Caco-2 (cell line): ENCODE measurements at regions of chr5 and their contacts with region 1.

Region 1: DNA sequence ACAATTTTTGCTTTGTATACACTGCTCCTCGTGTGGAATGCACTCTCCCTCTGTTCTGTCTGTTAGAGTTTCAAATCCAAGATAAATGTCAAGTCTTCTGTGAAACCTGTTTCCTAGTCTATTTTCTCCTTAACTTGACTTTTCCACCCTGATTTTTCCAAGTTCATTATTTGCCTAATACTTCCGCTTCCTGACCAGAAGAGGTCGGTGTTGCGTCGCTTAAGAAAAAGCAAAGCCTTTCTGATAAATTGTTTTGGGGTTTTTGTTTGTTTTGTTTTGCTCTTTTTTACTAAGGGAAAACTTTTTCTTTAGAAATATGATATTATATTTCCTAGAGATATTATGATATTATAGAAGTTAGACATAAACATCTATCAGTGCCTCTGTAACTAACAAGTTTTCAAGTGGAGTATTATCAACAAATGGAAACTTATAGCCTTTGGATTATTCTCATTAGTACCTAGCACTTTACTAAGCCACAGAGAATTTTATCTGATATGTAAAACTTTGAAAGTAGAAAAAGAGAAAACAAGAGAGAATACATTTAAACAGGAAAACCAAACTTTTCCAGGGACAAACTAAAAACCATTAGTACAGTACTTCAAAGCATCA is 55.8 kb downstream of the PHAX start:
- DNase-seq: peak in 1 of 2 experiments; percentile 18
- H3K4me3 ChIP-seq: no peak overlapping the region
- H3K4me3 Mint-ChIP-seq: no peak overlapping the region
- H3K27ac Mint-ChIP-seq: no peak overlapping the region
- H3K4me1 ChIP-seq: no peaks in the 10 kb centered on the region
- H3K4me1 Mint-ChIP-seq: no peaks in the 10 kb centered on the region
- H3K27me3 ChIP-seq: no peaks in the 10 kb centered on the region
- H3K27me3 Mint-ChIP-seq: no peaks in the 10 kb centered on the region
- CTCF ChIP-seq: peak; percentile 85 to 93

Region 2: GRCh38 chr5:126693806-126694802 is 37.6 kb after region 1 on chr5:
- CTCF ChIA-PET with region 1: no interaction called
- POLR2A ChIA-PET with region 1: no interaction called
- intact Hi-C with region 1: no loop called
- DNase-seq: no peak
- H3K4me3 ChIP-seq: no peak overlapping the region
- H3K4me3 Mint-ChIP-seq: no peak overlapping the region
- H3K27ac Mint-ChIP-seq: no peak overlapping the region
- H3K4me1 ChIP-seq: no peaks in the 10 kb centered on the region
- H3K4me1 Mint-ChIP-seq: no peaks in the 10 kb centered on the region
- H3K27me3 ChIP-seq: no peaks in the 10 kb centered on the region
- H3K27me3 Mint-ChIP-seq: no peaks in the 10 kb centered on the region
- CTCF ChIP-seq: no peak

Region 3: GRCh38 chr5:126707080-126707479 is 50.6 kb after region 1 on chr5:
- CTCF ChIA-PET with region 1: no interaction called
- POLR2A ChIA-PET with region 1: no interaction called
- intact Hi-C with region 1: no loop called
- DNase-seq: no peak
- H3K4me3 ChIP-seq: no peak overlapping the region
- H3K4me3 Mint-ChIP-seq: no peak overlapping the region
- H3K27ac Mint-ChIP-seq: no peak overlapping the region
- H3K4me1 ChIP-seq: no peaks in the 10 kb centered on the region
- H3K4me1 Mint-ChIP-seq: no peaks in the 10 kb centered on the region
- H3K27me3 ChIP-seq: no peaks in the 10 kb centered on the region
- H3K27me3 Mint-ChIP-seq: no peaks in the 10 kb centered on the region
- CTCF ChIP-seq: no peak

Region 4: GRCh38 chr5:126723643-126724042 is 67.1 kb after region 1 on chr5:
- CTCF ChIA-PET with region 1: no interaction called
- POLR2A ChIA-PET with region 1: no interaction called
- intact Hi-C with region 1: no loop called
- DNase-seq: no peak
- H3K4me3 ChIP-seq: no peak overlapping the region
- H3K4me3 Mint-ChIP-seq: no peak overlapping the region
- H3K27ac Mint-ChIP-seq: no peak overlapping the region
- H3K4me1 ChIP-seq: no peaks in the 10 kb centered on the region
- H3K4me1 Mint-ChIP-seq: no peaks in the 10 kb centered on the region
- H3K27me3 ChIP-seq: no peaks in the 10 kb centered on the region
- H3K27me3 Mint-ChIP-seq: no peaks in the 10 kb centered on the region
- CTCF ChIP-seq: no peak

Region 5: GRCh38 chr5:126776497-126777256 is 120.2 kb after region 1 on chr5 and contains the start of gene LMNB1:
- CTCF ChIA-PET with region 1: interaction called, 8 read pairs
- POLR2A ChIA-PET with region 1: no interaction called
- intact Hi-C with region 1: loop called (anchors 1 kb)
- DNase-seq: peak; percentile 98 to 99
- H3K4me3 ChIP-seq: peak within 1 kb of the TSS; percentile 92
- H3K4me3 Mint-ChIP-seq: peak within 1 kb of the TSS; percentile 99
- H3K27ac Mint-ChIP-seq: peak within 1 kb of the TSS; percentile 96
- H3K4me1 ChIP-seq: peaks cover 15% of the 10 kb centered on the region
- H3K4me1 Mint-ChIP-seq: peaks cover 6% of the 10 kb centered on the region
- H3K27me3 ChIP-seq: no peaks in the 10 kb centered on the region
- H3K27me3 Mint-ChIP-seq: no peaks in the 10 kb centered on the region
- CTCF ChIP-seq: no peak
- total RNA-seq, gene LMNB1: 143 and 152 TPM in 2 replicates

Region 6: DNA sequence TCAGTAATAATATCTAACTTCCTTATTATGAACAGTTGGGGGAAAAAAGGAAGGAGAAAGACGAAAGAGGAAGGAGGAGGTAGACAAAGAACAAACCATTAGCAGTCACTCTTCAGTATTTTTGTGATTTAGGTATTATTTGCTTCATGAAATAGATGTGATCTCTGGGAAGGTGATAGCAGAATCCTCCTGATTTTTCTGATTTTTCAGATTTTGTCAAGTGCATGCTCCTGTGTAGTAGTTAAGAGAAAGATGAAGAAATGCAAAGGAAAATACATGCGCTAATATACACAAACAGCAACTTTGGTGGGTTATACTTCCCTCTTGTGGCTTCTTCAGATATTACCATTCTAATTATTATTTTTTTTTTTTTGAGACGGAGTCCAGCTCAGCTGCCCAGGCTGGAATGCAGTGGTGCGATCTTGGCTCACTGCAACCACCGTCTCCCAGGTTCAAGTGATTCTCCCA is 152.1 kb after region 1 on chr5:
- CTCF ChIA-PET with region 1: no interaction called
- POLR2A ChIA-PET with region 1: interaction called, 4 read pairs
- intact Hi-C with region 1: loop called (anchors 1 kb)
- DNase-seq: peak in 1 of 2 experiments; percentile 35
- H3K4me3 ChIP-seq: no peak overlapping the region
- H3K4me3 Mint-ChIP-seq: no peak overlapping the region
- H3K27ac Mint-ChIP-seq: no peak overlapping the region
- H3K4me1 ChIP-seq: no peaks in the 10 kb centered on the region
- H3K4me1 Mint-ChIP-seq: no peaks in the 10 kb centered on the region
- H3K27me3 ChIP-seq: no peaks in the 10 kb centered on the region
- H3K27me3 Mint-ChIP-seq: no peaks in the 10 kb centered on the region
- CTCF ChIP-seq: peak; percentile 43 to 49

Region 7: DNA sequence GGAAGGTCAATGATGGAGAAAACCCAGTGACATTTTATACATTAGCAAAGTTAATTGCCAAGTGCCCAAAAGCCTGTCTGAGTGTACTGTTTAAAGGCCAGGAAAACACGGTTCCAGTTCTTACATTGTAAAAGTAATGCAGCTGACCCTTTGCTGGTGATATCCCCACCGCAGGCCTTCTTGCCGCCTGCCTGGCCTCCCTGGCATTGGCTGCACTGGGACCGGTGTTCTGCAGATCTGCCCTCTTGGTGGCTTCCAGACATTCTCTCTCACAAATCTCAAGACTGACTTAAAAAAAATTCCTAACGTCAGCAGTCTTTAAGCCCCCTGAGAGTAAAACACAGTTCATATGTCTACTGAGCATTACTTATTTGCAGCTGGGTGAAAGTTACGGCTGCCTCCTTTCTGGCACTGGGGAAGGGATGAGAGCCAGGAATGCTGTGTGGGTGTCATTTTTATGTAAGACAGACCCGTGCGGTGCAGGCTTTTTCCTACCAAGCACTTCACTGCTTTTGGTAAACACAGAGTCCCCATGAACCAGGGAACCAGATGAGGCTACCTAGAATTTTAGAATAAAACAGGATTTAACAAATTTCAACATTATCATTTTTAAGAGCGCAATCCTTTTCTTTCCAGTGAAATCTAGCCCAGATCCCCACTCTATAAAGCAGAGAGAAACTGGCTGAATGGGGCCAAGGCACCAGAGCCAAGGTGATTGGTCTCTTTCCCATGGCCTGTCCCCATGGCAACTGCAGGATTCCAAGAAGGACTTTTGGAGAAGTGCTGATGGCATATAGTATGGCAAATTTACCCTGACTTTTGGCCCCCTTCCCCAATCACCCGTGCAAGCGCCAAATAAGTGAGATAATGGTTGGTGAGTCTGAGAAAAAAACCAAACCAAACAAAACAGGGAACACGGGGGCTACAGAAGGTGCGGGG is 201.2 kb after region 1 on chr5:
- CTCF ChIA-PET with region 1: no interaction called
- POLR2A ChIA-PET with region 1: no interaction called
- intact Hi-C with region 1: loop called (anchors 5 kb)
- DNase-seq: no peak
- H3K4me3 ChIP-seq: no peak overlapping the region
- H3K4me3 Mint-ChIP-seq: no peak overlapping the region
- H3K27ac Mint-ChIP-seq: no peak overlapping the region
- H3K4me1 ChIP-seq: no peaks in the 10 kb centered on the region
- H3K4me1 Mint-ChIP-seq: no peaks in the 10 kb centered on the region
- H3K27me3 ChIP-seq: no peaks in the 10 kb centered on the region
- H3K27me3 Mint-ChIP-seq: no peaks in the 10 kb centered on the region
- CTCF ChIP-seq: no peak

Region 8: GRCh38 chr5:127229185-127229889 is 572.8 kb after region 1 on chr5:
- CTCF ChIA-PET with region 1: no interaction called
- POLR2A ChIA-PET with region 1: no interaction called
- intact Hi-C with region 1: loop called (anchors 5 kb)
- DNase-seq: peak; percentile 60 to 64
- H3K4me3 ChIP-seq: peak overlapping the region; percentile 60
- H3K4me3 Mint-ChIP-seq: peak overlapping the region; percentile 70
- H3K27ac Mint-ChIP-seq: no peak overlapping the region
- H3K4me1 ChIP-seq: no peaks in the 10 kb centered on the region
- H3K4me1 Mint-ChIP-seq: no peaks in the 10 kb centered on the region
- H3K27me3 ChIP-seq: no peaks in the 10 kb centered on the region
- H3K27me3 Mint-ChIP-seq: peaks cover 10% of the 10 kb centered on the region
- CTCF ChIP-seq: peak in 1 of 2 experiments; percentile 56

Region 9: DNA sequence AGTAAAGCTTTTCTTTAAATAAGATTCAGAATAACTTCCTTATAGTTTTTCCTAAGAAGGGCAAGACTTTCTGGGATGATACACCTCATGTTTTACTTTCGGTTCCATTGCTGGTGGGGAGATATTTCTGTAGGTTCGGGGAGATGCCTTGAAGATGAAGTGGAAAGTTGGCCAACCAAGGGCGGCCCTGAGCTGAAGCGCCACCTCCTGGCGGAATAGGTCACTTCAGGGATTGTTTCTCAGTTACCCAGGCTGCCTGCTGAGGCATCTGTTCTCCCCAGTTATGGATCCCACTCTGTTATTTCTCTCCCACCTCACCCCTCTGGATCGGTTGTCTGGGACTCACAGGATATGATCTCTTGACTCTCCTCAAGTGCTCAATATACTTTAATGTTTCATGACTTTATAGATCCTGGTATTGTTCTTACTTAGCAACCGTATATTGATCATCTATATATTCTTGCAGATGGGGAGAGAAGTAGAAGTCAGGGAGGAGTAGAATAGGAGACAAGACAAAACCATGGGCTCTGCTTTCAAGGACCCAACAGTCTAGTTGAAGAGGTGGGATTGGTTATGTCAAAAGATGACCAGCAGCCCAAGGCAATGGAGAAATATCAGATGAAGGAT is 657.5 kb after region 1 on chr5:
- CTCF ChIA-PET with region 1: no interaction called
- POLR2A ChIA-PET with region 1: no interaction called
- intact Hi-C with region 1: loop called (anchors 2 kb)
- DNase-seq: peak; percentile 50 to 73
- H3K4me3 ChIP-seq: no peak overlapping the region
- H3K4me3 Mint-ChIP-seq: no peak overlapping the region
- H3K27ac Mint-ChIP-seq: no peak overlapping the region
- H3K4me1 ChIP-seq: no peaks in the 10 kb centered on the region
- H3K4me1 Mint-ChIP-seq: no peaks in the 10 kb centered on the region
- H3K27me3 ChIP-seq: no peaks in the 10 kb centered on the region
- H3K27me3 Mint-ChIP-seq: peaks cover 4% of the 10 kb centered on the region
- CTCF ChIP-seq: peak; percentile 75 to 80

Region 10: GRCh38 chr5:127492854-127493738 is 836.6 kb after region 1 on chr5:
- CTCF ChIA-PET with region 1: no interaction called
- POLR2A ChIA-PET with region 1: no interaction called
- intact Hi-C with region 1: loop called (anchors 2 kb)
- DNase-seq: peak in 1 of 2 experiments; percentile 17
- H3K4me3 ChIP-seq: no peak overlapping the region
- H3K4me3 Mint-ChIP-seq: no peak overlapping the region
- H3K27ac Mint-ChIP-seq: no peak overlapping the region
- H3K4me1 ChIP-seq: no peaks in the 10 kb centered on the region
- H3K4me1 Mint-ChIP-seq: no peaks in the 10 kb centered on the region
- H3K27me3 ChIP-seq: no peaks in the 10 kb centered on the region
- H3K27me3 Mint-ChIP-seq: peaks cover 35% of the 10 kb centered on the region
- CTCF ChIP-seq: peak; percentile 70 to 93